Cardiac septum (tissue), 1 donor: ENCODE measurements at regions of chr2 and their contacts with region 1.

Region 1: GRCh38 chr2:237886685-237887481 is 27.5 kb downstream of the RAMP1 start:
- DNase-seq: peak; percentile 91

Region 2: GRCh38 chr2:237791977-237792727 is 94.7 kb before region 1 on chr2:
- intact Hi-C with region 1: no loop called
- DNase-seq: no peak

Region 3: DNA sequence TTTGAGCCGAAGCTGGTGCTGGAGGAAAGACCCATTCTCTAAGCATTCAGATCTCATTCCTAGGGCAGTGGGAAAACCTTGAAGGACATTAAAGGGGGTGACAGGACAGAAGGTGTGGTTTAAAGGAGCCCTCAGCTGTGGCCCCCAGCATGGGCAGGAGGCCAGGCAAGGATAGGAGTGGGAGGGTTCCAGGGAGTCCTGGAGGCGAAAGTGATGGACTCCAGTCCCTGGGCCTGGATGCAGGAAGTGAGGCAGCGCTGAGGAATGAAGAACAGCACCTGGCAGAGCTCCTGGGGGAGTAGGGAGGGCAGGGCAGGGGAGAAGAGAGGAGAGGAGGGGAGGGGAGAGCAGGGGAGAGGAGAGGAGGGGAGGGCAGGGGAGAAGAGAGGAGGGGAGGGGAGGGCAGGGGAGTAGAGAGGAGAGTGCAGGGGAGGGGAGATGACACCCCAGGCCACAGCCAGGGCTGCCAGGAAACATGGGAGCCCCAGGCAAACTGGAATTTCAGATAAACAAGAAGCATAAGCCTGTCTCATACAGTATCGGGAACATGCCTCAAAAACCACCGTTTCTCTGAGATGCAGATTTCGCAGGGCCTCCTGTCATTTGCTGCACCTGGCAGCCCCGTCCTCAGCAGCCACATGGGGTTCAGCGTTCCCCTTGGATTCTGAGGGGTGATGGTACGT is 21.8 kb before region 1 on chr2:
- intact Hi-C with region 1: loop called (anchors 1 kb)
- DNase-seq: no peak

Region 4: DNA sequence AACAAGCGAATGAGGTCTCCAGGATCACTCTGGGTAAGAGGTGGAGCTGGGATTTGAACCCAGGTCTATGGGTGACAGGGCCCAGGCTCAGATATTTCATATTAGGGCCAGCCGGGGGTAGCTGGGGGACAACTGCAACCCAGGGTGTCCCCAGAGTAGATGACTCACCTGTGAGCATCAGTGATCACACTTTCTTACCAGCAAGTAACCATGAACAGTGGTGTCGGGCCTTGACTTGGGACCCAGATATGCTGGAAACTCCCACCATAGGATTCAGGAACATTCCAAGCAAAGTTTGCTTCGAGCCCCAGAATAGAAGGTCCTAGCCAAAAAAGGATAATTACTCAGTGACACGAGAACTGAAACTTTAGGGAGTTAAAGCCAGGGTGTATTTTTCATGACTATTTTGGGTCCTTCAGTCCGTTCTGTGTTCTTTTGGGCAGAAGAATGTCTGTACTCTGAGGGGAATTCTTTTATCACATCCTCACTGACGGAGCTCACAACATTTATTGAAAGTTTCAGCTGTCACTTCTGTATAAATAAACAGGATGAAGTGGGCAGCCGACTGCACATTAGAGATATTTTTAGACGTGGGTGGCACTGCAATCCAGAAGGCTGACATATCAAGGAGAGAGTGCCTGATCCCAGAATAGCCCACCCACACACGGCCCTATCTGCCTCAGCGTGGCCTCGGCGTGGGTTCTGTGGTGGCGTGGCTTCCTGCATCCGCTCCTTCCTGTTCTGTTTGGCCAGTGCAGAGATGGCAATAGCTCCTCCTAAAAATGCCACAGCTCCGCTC is 18.1 kb after region 1 on chr2:
- intact Hi-C with region 1: loop called (anchors 1 kb)
- DNase-seq: peak; percentile 80